ENCODE measurements at regions of chr11 and their contacts with region 1.

Region 1: DNA sequence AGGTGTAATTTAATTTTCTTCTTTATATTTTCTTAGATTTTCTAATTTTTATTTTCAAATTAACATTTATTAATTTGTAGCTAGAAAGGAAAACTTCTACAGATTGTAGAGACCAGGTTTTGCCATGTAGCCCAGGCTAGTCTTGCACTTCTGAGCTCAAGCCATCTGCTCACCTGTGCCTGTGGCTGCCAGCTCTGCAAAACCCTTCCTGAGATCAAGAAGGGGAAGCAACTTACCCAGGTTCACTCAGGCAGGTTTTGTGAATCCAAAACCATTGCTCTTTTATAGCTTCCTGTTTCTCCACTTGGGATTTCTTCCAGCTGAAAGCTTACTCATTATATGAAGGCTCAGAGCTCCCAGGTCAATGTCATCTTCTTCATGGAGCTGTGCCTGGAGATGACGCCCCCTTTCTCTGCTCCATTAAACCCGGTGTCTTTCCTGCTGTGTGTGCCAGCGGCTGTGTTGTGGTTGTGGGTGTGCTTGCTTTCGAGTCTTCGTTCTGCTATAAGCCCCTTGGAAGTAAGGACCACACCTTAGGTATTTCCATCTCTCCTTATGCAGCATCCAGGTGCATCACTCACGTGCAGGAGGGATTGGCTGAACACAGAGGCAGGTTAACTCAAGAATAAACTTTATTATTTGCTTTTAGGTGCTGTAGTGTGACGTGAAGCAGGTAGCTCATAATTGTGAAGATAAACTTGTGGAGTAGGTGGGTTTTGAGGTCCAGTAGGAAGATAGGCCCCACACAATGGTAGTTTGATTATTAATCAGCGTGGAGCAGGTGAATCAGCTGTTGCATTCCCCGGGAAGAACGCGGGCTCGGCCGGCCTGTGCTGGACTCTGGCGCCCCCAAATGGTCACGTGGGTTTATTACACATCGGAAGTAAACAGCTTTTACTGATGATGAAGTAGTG is 42.2 kb upstream of the INCENP start:
- DNase-seq: peak; percentile 77
- H3K4me3 Mint-ChIP-seq: no peak overlapping the region
- H3K27ac Mint-ChIP-seq: no peak overlapping the region
- H3K4me1 Mint-ChIP-seq: peaks cover 6% of the 10 kb centered on the region
- H3K27me3 Mint-ChIP-seq: peaks cover 3% of the 10 kb centered on the region

Region 2: GRCh38 chr11:61871158-61871597 is 210.5 kb before region 1 on chr11:
- CTCF ChIA-PET with region 1: interaction called, 16 read pairs
- POLR2A ChIA-PET with region 1: no interaction called
- DNase-seq: peak; percentile 63
- H3K4me3 Mint-ChIP-seq: peak overlapping the region; percentile 62
- H3K27ac Mint-ChIP-seq: no peak overlapping the region
- H3K4me1 Mint-ChIP-seq: peaks cover 5% of the 10 kb centered on the region
- H3K27me3 Mint-ChIP-seq: peaks cover 2% of the 10 kb centered on the region

Region 3: GRCh38 chr11:61908730-61909315 is 172.8 kb before region 1 on chr11:
- CTCF ChIA-PET with region 1: interaction called, 11 read pairs
- POLR2A ChIA-PET with region 1: no interaction called
- DNase-seq: no peak
- H3K4me3 Mint-ChIP-seq: no peak overlapping the region
- H3K27ac Mint-ChIP-seq: no peak overlapping the region
- H3K4me1 Mint-ChIP-seq: no peaks in the 10 kb centered on the region
- H3K27me3 Mint-ChIP-seq: no peaks in the 10 kb centered on the region

Region 4: GRCh38 chr11:61961570-61962212 is 119.9 kb before region 1 on chr11:
- CTCF ChIA-PET with region 1: interaction called, 10 read pairs
- POLR2A ChIA-PET with region 1: no interaction called
- DNase-seq: no peak
- H3K4me3 Mint-ChIP-seq: no peak overlapping the region
- H3K27ac Mint-ChIP-seq: no peak overlapping the region
- H3K4me1 Mint-ChIP-seq: peaks cover 31% of the 10 kb centered on the region
- H3K27me3 Mint-ChIP-seq: peaks cover 1% of the 10 kb centered on the region

Region 5: GRCh38 chr11:62069986-62070919 is 11.4 kb before region 1 on chr11:
- CTCF ChIA-PET with region 1: interaction called, 12 read pairs
- POLR2A ChIA-PET with region 1: no interaction called
- DNase-seq: no peak
- H3K4me3 Mint-ChIP-seq: no peak overlapping the region
- H3K27ac Mint-ChIP-seq: no peak overlapping the region
- H3K4me1 Mint-ChIP-seq: peaks cover 2% of the 10 kb centered on the region
- H3K27me3 Mint-ChIP-seq: no peaks in the 10 kb centered on the region

Region 6: DNA sequence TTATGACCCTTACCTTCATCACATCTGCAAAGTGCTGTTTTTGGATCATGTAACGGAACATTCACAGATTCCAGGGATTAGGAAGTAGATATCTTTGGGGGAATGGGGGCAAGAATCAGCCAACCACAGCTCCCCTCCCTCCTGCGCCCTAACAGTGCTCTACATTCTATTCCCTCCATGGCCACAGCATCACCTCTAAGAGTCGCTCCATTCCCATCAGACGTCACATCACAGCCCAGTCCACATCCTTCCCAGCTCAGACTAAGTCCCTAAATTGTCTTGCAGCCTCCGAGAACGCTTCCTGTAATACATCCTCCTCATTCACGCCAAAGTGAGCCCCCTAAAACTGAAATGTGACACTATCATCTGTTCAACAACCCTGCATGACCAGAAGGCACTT is 114.3 kb after region 1 on chr11:
- CTCF ChIA-PET with region 1: no interaction called
- POLR2A ChIA-PET with region 1: no interaction called
- DNase-seq: no peak
- H3K4me3 Mint-ChIP-seq: no peak overlapping the region
- H3K27ac Mint-ChIP-seq: no peak overlapping the region
- H3K4me1 Mint-ChIP-seq: no peaks in the 10 kb centered on the region
- H3K27me3 Mint-ChIP-seq: peaks cover 34% of the 10 kb centered on the region

Region 7: DNA sequence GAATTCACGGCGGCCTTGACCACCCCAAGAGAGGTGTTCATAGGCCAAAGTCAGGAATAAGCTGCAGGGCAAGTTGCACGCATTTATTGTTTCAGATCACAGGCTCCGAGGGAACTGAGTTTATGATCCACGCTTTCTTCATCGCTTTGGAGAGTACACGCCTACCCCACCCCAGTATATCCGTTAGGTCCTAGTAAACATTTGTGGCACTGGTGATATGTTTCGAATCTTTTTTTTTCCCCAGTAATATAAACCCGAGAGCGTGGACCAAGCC is 564.0 kb after region 1 on chr11:
- CTCF ChIA-PET with region 1: no interaction called
- POLR2A ChIA-PET with region 1: no interaction called
- DNase-seq: no peak
- H3K4me3 Mint-ChIP-seq: peak overlapping the region; percentile 97
- H3K27ac Mint-ChIP-seq: peak overlapping the region; percentile 95
- H3K4me1 Mint-ChIP-seq: peaks cover 45% of the 10 kb centered on the region
- H3K27me3 Mint-ChIP-seq: no peaks in the 10 kb centered on the region